ENCODE measurements at regions of chr6 and their contacts with region 1.

Region 1: GRCh38 chr6:166687877-166688200 is 60.8 kb upstream of the RPS6KA2 start:
- DNase-seq: no peak
- H3K4me3 ChIP-seq: no peak overlapping the region
- H3K27ac ChIP-seq: no peak overlapping the region
- H3K4me1 ChIP-seq: peaks cover 14 to 18% (median 14%) of the 10 kb centered on the region in 4 donors
- H3K27me3 ChIP-seq: no peaks in the 10 kb centered on the region
- CTCF ChIP-seq: no peak
- EP300 ChIP-seq: no peak
- POLR2A ChIP-seq: no peak

Region 2: DNA sequence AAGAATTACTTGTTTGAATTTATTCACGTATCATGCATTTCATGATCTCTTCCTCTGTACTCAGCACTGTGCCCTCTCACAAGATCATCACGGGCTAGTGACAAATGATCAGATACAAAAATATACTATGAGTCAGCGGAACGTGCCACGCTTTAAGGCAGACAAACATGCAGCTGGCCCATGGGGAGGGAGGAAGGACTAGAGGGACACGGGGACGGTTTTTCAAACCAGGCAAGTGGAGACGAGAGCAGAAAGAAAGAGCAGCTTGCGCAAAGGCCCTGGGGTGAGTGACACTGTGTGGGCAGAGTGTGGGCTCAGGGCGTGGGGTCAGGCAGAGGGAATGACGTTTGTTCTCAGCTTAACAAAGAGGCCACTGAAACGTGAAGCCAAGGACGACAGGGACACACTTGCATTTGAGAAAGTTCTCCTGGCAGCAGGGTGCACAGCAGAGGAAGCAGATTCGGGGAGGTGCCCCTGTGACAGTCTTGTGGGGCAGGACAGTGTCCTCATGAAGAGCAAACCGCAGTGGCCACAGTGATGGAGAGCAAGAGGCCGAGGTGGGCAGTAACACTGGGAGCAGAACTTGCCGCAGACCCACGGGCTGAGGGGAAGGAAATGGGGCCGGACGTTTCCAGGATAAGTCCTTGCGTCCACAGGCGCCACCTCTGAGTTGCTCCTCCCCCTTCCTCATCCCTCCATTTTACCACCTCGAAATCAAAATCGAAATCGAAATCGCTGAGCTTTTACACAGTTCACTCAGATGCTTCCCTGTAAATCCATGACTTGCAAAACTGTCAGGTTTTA is 53.9 kb before region 1 on chr6:
- intact Hi-C with region 1: loop called (anchors 5 kb)
- DNase-seq: no peak
- H3K4me3 ChIP-seq: no peak overlapping the region
- H3K27ac ChIP-seq: no peak overlapping the region
- H3K4me1 ChIP-seq: peaks cover 14 to 28% (median 17%) of the 10 kb centered on the region in 4 donors
- H3K27me3 ChIP-seq: no peaks in the 10 kb centered on the region
- CTCF ChIP-seq: no peak
- EP300 ChIP-seq: no peak
- POLR2A ChIP-seq: no peak